ENCODE measurements at regions of chr16 and their contacts with region 1.

Region 1: DNA sequence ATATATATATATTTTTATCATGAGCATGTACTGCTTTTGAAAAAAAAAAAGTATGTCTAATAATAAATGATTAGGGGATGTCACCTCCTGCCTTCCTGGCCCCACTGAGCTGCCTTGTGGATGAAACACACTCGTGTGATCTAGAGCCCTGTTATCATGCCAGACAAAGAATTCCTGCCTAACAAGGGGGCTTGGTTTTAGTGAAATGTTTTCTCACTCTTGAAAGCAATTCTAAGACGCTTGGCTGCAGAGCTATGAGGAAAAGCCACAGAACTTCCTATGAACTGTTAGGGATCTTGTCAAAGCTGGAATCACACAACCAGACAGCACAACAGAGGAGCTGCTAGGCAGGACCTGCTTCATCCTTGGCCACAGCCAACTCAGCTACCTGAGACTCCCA is 4.0 kb downstream of the ZDHHC1 start:
- DNase-seq: no peak
- ATAC-seq: no peak
- H3K4me3 ChIP-seq: no peak overlapping the region
- H3K27ac ChIP-seq: no peak overlapping the region
- H3K4me1 ChIP-seq: peaks cover 3% of the 10 kb centered on the region
- H3K27me3 ChIP-seq: no peaks in the 10 kb centered on the region
- CTCF ChIP-seq: no peak
- POLR2A ChIP-seq: no peak
- RAD21 ChIP-seq: no peak

Region 2: GRCh38 chr16:66880288-66881013 is 531.8 kb before region 1 on chr16 and contains the start of gene PDP2:
- CTCF ChIA-PET with region 1: no interaction called
- POLR2A ChIA-PET with region 1: no interaction called
- dilution Hi-C with region 1: no loop called
- in situ Hi-C with region 1: no loop called
- intact Hi-C with region 1: no loop called
- DNase-seq: peak; percentile 90
- ATAC-seq: peak; percentile 99
- H3K4me3 ChIP-seq: peak within 1 kb of the TSS; percentile 79
- H3K27ac ChIP-seq: peak within 1 kb of the TSS; percentile 39
- H3K4me1 ChIP-seq: peaks cover 8% of the 10 kb centered on the region
- H3K27me3 ChIP-seq: no peaks in the 10 kb centered on the region
- CTCF ChIP-seq: no peak
- POLR2A ChIP-seq: 0 out of 2 replicates have a peak, but pooled peaks have one; percentile 42
- RAD21 ChIP-seq: no peak
- total RNA-seq, gene PDP2: 12.5 and 16.8 TPM in 2 replicates

Region 3: GRCh38 chr16:67207857-67208519 is 204.3 kb before region 1 on chr16:
- CTCF ChIA-PET with region 1: no interaction called
- POLR2A ChIA-PET with region 1: no interaction called
- dilution Hi-C with region 1: no loop called
- in situ Hi-C with region 1: no loop called
- intact Hi-C with region 1: no loop called
- DNase-seq: peak; percentile 44
- ATAC-seq: peak; percentile 75
- H3K4me3 ChIP-seq: no peak overlapping the region
- H3K27ac ChIP-seq: no peak overlapping the region
- H3K4me1 ChIP-seq: peaks cover 8% of the 10 kb centered on the region
- H3K27me3 ChIP-seq: no peaks in the 10 kb centered on the region
- CTCF ChIP-seq: no peak
- POLR2A ChIP-seq: no peak
- RAD21 ChIP-seq: no peak

Region 4: DNA sequence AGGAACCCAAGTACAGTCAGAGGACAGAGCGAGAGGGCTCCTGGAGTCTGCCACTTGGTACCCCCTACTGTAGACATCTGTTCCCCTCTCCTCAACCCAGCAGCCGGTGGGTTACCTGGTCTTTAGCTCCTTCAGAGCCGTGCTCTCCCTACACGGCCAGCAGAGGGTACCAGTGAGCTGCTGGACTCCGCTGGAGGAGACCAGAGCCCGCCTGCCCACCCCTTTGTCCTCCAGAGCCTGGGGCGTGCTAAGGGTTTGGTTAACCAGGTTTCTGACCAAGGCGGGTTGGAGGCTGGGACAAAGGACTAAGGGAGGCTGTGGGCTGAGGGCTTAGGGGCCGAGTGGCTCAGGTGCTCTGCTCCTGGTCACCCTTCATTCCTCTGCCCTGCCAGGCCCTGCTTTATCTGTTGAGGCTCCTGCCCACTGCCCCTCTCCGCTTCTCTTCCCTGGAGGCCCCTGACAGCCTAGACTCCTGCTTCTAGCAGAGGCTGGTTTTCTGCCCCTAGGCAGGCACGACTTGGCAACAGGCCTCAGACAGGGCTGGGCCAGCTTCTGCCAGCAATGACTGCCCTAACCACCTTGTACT is 15.9 kb after region 1 on chr16:
- CTCF ChIA-PET with region 1: interaction called, 12 read pairs
- POLR2A ChIA-PET with region 1: interaction called, 5 read pairs
- dilution Hi-C with region 1: no loop called
- in situ Hi-C with region 1: no loop called
- intact Hi-C with region 1: no loop called
- DNase-seq: peak; percentile 47
- ATAC-seq: peak; percentile 73
- H3K4me3 ChIP-seq: no peak overlapping the region
- H3K27ac ChIP-seq: no peak overlapping the region
- H3K4me1 ChIP-seq: peaks cover 5% of the 10 kb centered on the region; the same call in 1 of the 2 replicates
- H3K27me3 ChIP-seq: peaks cover 59% of the 10 kb centered on the region
- CTCF ChIP-seq: peak; percentile 78
- POLR2A ChIP-seq: no peak
- RAD21 ChIP-seq: peak; percentile 71

Region 5: GRCh38 chr16:67537270-67537635 is 125.0 kb after region 1 on chr16:
- CTCF ChIA-PET with region 1: no interaction called
- POLR2A ChIA-PET with region 1: no interaction called
- dilution Hi-C with region 1: no loop called
- in situ Hi-C with region 1: no loop called
- intact Hi-C with region 1: no loop called
- DNase-seq: peak; percentile 36
- ATAC-seq: peak; percentile 77
- H3K4me3 ChIP-seq: peak overlapping the region; percentile 51
- H3K27ac ChIP-seq: peak overlapping the region; percentile 41; the same call in 1 of the 2 replicates
- H3K4me1 ChIP-seq: peaks cover 12% of the 10 kb centered on the region
- H3K27me3 ChIP-seq: no peaks in the 10 kb centered on the region
- CTCF ChIP-seq: no peak
- POLR2A ChIP-seq: peak; percentile 67; the same call in 1 of the 2 replicates
- RAD21 ChIP-seq: no peak

Region 6: DNA sequence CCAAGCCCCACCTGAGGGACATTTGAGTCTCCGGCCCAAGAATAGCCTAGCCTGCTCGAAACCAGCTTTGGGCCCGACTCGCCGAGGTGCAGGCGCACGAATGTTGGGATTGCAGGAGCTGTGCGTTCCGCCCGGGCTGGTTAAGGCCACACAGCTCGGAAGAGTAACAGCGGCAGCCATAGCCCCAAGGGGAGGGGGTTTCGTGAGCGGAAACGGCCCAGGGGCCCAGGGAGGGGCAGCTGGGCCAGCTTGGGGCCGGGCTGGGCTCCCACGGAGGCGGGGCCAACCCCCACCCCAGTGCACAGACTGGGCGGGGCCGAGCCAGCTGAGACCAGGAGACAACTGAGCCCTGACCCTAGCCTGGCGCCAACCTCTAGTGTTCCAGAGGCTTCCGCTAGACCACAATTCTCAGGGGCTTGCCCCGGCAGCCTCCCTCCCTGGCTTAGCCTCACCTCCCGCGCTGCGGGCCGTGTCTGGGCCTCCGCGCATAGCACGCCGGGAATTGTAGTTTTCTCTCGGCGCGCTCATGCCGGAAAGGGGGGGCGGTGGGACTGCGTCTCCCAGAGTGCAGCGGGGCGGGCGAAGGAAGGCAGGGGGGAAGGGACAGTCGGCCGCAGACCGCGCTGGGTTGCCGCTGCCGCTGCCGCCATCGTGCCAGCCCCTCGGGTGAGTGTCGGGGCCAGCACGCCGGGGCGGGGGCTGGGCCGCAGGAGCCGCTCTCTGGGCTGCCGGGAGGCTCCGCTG is 434.2 kb after region 1 on chr16 and contains the start of gene NUTF2:
- CTCF ChIA-PET with region 1: no interaction called
- POLR2A ChIA-PET with region 1: no interaction called
- dilution Hi-C with region 1: no loop called
- in situ Hi-C with region 1: no loop called
- intact Hi-C with region 1: no loop called
- DNase-seq: peak; percentile 85
- ATAC-seq: peak; percentile 76
- H3K4me3 ChIP-seq: peak within 1 kb of the TSS; percentile 53
- H3K27ac ChIP-seq: peak within 1 kb of the TSS; percentile 98
- H3K4me1 ChIP-seq: peaks cover 13% of the 10 kb centered on the region
- H3K27me3 ChIP-seq: no peaks in the 10 kb centered on the region
- CTCF ChIP-seq: no peak
- POLR2A ChIP-seq: peak; percentile 83
- RAD21 ChIP-seq: no peak
- total RNA-seq, gene NUTF2: 42.7 and 55.0 TPM in 2 replicates